HEK293 (cell line): ENCODE measurements at regions of chr6 and their contacts with region 1.

Region 1: GRCh38 chr6:116779573-116780164 is 14.2 kb upstream of the FAM162B start:
- H3K4me3 ChIP-seq: no peak overlapping the region
- H3K27ac ChIP-seq: no peak overlapping the region
- H3K4me1 ChIP-seq: no peaks in the 10 kb centered on the region
- CTCF ChIP-seq: no peak

Region 2: DNA sequence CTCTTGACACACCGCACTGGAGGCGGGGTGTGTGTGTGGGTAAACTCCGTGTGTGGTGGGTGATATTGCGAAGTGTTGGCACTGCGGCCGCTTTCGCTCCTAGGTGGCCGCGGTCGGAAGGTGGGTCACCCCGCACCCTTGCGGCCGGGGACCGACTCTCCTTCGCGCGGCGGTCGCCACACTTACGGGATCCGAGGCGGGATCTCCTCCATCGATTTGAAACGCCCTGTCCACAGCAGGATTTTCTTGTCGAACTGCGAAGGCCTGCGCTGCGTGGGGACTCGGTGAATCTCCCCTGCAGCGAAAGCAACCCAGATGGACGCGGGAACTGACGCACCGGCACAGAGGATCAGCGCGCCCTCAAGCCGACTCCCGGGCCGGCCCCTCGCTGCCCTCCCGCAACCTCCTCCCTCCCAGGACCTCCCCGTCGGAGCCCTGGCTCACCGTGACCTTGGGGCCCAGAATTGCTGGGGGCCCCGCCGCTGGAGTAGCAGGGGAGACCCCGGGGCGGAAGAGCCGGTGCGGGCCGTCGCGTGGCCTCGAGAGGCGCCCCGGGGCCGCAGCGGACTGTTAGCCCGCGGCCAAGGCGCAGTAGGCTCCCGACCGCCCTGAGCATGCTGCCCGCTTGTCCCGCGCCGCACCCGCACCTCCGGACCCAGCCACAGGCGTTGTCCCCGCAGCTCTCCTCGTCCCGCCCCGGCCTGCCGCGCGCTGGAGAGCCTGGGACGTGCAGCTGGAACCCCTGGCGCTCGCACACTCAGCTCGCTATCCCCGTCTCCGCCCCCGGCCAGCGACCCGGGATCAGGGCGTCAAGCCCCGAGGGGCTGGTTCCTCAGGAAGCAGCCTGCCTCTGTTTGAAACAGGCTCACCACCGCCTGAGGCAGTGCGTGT is 14.5 kb before region 1 on chr6 and contains the start of gene FAM162B:
- CTCF ChIA-PET with region 1: interaction called, 27 read pairs
- POLR2A ChIA-PET with region 1: no interaction called
- H3K4me3 ChIP-seq: peak within 1 kb of the TSS; percentile 46
- H3K27ac ChIP-seq: no peak within 1 kb of the TSS; the same call in 1 of the 2 replicates
- H3K4me1 ChIP-seq: no peaks in the 10 kb centered on the region
- CTCF ChIP-seq: no peak

Region 3: DNA sequence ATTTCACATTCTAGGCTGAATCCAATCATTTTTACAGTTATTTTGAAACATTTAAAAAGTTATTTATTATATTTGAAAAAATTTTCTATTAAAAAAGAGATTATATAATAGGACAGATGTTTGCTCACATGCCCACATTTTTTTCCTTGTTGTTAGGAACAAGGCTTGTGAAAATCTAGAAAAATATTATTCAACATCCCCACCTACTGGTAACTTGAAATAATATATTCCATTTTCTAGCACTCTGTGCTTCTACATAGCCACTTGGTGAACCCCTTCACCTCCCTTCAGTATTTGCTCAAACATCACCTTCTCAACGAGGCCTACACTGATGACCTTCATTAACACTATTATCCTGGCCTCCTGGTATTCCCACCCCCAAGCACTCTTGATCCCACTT is 67.6 kb after region 1 on chr6:
- CTCF ChIA-PET with region 1: interaction called, 50 read pairs
- POLR2A ChIA-PET with region 1: no interaction called
- H3K4me3 ChIP-seq: no peak overlapping the region
- H3K27ac ChIP-seq: no peak overlapping the region
- H3K4me1 ChIP-seq: no peaks in the 10 kb centered on the region
- CTCF ChIP-seq: 0 out of 2 replicates have a peak, but pooled peaks have one; percentile 24

Region 4: GRCh38 chr6:117089604-117090003 is 309.9 kb after region 1 on chr6:
- CTCF ChIA-PET with region 1: no interaction called
- POLR2A ChIA-PET with region 1: no interaction called
- H3K4me3 ChIP-seq: no peak overlapping the region
- H3K27ac ChIP-seq: no peak overlapping the region
- H3K4me1 ChIP-seq: no peaks in the 10 kb centered on the region
- CTCF ChIP-seq: no peak

Region 5: DNA sequence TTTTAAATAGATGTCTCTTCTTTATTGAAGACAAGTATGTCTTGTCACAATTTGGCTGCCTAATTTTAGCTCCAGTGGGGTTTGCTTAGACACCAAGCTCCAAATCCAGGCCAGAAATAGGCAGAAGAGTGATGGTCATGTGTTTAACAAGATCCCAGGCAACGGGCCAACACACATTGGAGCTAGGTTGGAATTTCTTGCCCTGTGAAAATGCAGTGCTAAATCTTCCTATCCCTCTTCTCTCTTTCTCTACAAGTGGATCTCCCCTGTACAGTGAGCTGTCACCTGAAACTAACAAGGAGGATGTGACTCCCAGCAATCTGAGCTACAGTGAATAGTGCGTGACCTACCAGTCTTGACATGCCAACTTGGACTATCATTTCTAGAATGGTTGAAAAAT is 420.4 kb after region 1 on chr6:
- CTCF ChIA-PET with region 1: no interaction called
- POLR2A ChIA-PET with region 1: no interaction called
- H3K4me3 ChIP-seq: no peak overlapping the region
- H3K27ac ChIP-seq: no peak overlapping the region
- H3K4me1 ChIP-seq: no peaks in the 10 kb centered on the region
- CTCF ChIP-seq: no peak